Ascending aorta (tissue), 2 donors: ENCODE measurements at regions of chr17 and their contacts with region 1.

Region 1: GRCh38 chr17:15409721-15410250 is 57.6 kb downstream of the CDRT4 start:
- DNase-seq: peak; percentile 15 to 81
- H3K4me3 ChIP-seq: peak overlapping the region; percentile 35 to 57
- H3K27ac ChIP-seq: peak overlapping the region; percentile 71 to 72
- H3K4me1 ChIP-seq: peaks cover 0 to 10% of the 10 kb centered on the region in 2 donors
- H3K27me3 ChIP-seq: no peaks in the 10 kb centered on the region
- CTCF ChIP-seq: no peak

Region 2: GRCh38 chr17:15262291-15263205 is 147.2 kb before region 1 on chr17:
- intact Hi-C with region 1: loop called (anchors 1 kb)
- DNase-seq: peak; percentile 74 to 94
- H3K4me3 ChIP-seq: peak overlapping the region; percentile 82 to 94
- H3K27ac ChIP-seq: peak overlapping the region; percentile 98 to 99
- H3K4me1 ChIP-seq: peaks cover 9 to 24% of the 10 kb centered on the region in 2 donors
- H3K27me3 ChIP-seq: no peaks in the 10 kb centered on the region
- CTCF ChIP-seq: peak in 1 of 3 experiments; percentile 32

Region 3: DNA sequence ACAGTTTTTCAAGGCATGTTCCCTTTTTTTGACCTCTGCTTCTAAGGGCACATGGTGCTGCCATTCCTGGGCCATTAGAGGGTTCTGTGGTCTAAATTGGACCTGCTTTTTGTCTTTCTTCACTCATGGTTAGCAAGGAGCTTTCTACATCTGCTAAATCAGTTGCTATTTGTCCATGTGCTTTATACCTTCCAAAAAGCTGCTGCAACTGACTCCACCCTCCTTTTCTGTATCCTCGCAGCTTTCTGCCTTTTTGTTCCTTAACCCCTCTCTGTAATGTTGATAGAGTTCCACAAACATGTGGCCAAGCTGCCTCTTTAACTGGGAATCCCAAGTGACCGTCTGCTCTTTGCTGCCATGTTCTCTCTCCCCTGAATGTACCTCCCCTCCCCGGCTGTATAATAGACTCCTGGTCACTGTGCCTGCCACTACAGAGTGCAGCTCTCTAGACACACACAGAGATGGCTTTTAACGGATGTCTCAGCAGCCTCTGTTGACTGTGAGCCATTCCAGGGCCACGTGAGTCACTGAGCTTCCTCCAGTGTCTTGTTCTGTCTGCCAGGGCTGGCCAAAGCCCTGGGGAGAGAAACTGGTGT is 11.0 kb before region 1 on chr17:
- intact Hi-C with region 1: no loop called
- DNase-seq: no peak
- H3K4me3 ChIP-seq: no peak overlapping the region
- H3K27ac ChIP-seq: no peak overlapping the region
- H3K4me1 ChIP-seq: peaks cover 0 to 2% of the 10 kb centered on the region in 2 donors
- H3K27me3 ChIP-seq: no peaks in the 10 kb centered on the region
- CTCF ChIP-seq: no peak

Region 4: DNA sequence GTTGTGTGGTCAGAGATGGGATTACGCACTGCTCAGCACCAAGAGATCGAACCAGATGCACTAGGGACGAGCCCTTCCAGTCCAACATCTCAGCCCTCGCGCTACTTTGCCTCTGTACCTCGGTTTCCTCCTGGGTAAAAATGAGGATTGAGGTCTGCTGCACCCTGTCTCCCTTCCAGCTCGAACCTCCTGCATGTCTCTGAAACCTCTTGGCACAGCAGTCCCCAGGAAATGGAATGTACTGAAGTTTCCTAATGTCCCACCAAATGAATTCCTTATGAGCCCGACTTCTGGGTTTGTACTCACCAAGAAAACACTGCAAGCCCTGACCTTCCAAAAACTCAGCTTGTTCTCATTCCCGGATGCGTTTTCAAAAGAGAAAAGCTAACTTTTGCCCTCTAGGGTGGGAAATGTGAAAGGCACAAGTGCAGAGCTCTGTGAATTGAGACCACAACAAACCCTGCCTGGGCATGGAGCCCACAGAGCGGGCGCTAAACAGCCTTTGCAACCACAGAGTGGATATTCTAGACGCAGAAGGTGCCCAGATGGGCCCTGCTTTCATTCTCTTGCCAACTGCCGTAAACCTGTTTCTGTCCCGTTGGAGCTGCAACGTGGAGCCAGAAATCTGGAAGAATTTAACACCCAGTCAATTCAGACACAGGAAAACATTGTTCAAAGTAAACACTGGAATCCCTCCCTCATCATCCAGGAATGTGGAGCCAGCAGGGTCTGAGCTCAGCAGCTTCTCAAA is 47.4 kb after region 1 on chr17:
- intact Hi-C with region 1: loop called (anchors 2 kb)
- DNase-seq: peak in 1 of 2 donors; percentile 79
- H3K4me3 ChIP-seq: peak overlapping the region in 1 of 2 donors; percentile 46
- H3K27ac ChIP-seq: peak overlapping the region; percentile 76 to 82
- H3K4me1 ChIP-seq: peaks cover 8 to 19% of the 10 kb centered on the region in 2 donors
- H3K27me3 ChIP-seq: no peaks in the 10 kb centered on the region
- CTCF ChIP-seq: peak in 2 of 3 experiments; percentile 19 to 39